Vagina (tissue), 2 donors: ENCODE measurements at regions of chr7 and their contacts with region 1.

Region 1: DNA sequence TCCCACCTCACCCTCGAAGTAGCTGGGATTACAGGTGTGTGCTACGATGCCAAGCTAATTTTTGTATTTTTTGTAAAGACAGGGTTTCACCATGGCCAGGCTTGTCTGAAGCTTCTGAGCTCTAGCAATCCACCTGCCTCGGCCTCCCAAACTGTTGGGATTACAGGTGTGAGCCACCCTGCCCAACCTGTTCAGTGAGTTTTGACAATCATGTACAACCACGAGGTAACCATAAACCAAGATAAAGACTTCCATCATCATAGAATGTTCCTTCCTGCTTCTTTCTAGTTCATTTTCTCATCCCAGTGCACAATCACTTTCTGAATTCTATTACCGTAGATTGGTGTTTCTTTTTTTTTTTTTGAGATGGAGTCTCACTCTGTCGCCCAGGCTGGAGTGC is 30.5 kb upstream of the MKRN1 start:
- DNase-seq: no peak
- H3K4me3 ChIP-seq: no peak overlapping the region
- H3K27ac ChIP-seq: no peak overlapping the region
- H3K4me1 ChIP-seq: no peaks in the 10 kb centered on the region
- H3K27me3 ChIP-seq: no peaks in the 10 kb centered on the region
- CTCF ChIP-seq: no peak
- POLR2A ChIP-seq: no peak

Region 2: GRCh38 chr7:140435252-140435895 is 74.4 kb before region 1 on chr7:
- intact Hi-C with region 1: no loop called
- DNase-seq: no peak
- H3K4me3 ChIP-seq: no peak overlapping the region
- H3K27ac ChIP-seq: no peak overlapping the region
- H3K4me1 ChIP-seq: no peaks in the 10 kb centered on the region
- H3K27me3 ChIP-seq: no peaks in the 10 kb centered on the region
- CTCF ChIP-seq: no peak
- POLR2A ChIP-seq: no peak

Region 3: DNA sequence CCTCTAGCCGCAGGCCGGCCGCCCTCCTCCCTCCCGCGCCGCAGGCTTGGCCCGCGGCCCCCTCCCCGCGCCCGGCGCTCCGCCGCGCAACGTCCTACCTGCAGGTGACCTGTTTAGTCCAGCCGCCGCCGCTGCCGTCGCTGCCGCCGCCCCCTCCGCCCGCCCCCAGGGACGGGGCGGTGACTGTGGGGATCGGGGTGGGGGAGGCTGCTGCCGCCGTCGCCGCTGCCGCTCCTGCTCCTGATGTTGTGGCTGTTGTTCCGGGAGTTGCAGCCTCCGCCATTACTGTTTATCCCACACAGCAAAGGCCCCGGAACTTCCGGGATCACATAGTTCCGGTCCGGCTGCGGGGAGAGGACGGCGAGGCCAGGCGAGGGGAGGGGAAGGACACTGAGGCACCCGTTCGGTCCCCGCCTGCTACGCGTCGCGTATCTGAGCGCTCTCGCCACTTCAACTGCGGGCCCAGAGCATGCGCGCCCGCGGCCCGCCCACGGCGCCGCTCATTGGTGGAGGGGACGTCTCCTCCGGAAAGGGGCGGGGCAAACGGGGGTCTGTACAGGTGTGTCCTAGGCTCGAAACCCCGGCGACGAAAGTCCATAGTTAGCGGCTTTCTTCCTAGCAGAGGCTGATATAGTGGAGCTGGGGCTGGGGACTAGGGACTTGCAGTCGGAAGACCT is 30.6 kb before region 1 on chr7 and contains the start of gene MKRN1:
- intact Hi-C with region 1: loop called (anchors 2 kb)
- DNase-seq: peak in 1 of 2 donors; percentile 91
- H3K4me3 ChIP-seq: peak within 1 kb of the TSS; percentile 98
- H3K27ac ChIP-seq: peak within 1 kb of the TSS; percentile 94
- H3K4me1 ChIP-seq: peaks cover 24% of the 10 kb centered on the region
- H3K27me3 ChIP-seq: no peaks in the 10 kb centered on the region
- CTCF ChIP-seq: no peak
- POLR2A ChIP-seq: peak in 1 of 2 donors; percentile 62
- total RNA-seq, gene MKRN1: 38.8 TPM

Region 4: DNA sequence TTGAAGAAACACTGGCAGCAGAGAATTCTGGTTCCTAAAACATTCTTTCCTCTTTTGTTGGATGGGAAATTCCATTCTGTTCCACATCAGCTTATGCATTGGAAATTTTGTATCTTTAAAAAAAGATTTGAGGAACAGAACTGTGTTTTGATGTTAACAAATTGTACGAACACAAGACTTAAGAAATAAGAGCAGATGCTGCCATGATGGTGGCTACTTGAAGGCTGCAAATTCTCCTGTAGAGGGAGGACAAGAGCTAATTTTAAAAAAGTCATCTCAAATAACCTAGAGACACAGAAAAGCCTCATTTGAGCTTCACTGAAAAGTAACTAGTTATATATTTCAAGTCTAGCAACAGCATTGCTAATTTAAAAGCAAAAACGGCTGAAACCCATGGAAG is 216.5 kb after region 1 on chr7:
- intact Hi-C with region 1: no loop called
- DNase-seq: no peak
- H3K4me3 ChIP-seq: no peak overlapping the region
- H3K27ac ChIP-seq: no peak overlapping the region
- H3K4me1 ChIP-seq: no peaks in the 10 kb centered on the region
- H3K27me3 ChIP-seq: no peaks in the 10 kb centered on the region
- CTCF ChIP-seq: no peak
- POLR2A ChIP-seq: no peak